ENCODE measurements at regions of chr2 and their contacts with region 1.

Region 1: GRCh38 chr2:54558188-54559005 is 102.3 kb downstream of the SPTBN1 start:
- DNase-seq: peak; percentile 64
- ATAC-seq: peak; percentile 47
- H3K4me3 ChIP-seq: peak overlapping the region; percentile 54
- H3K27ac ChIP-seq: peak overlapping the region; percentile 3; the same call in 1 of the 2 replicates
- H3K4me1 ChIP-seq: peaks cover 21% of the 10 kb centered on the region
- H3K27me3 ChIP-seq: no peaks in the 10 kb centered on the region
- CTCF ChIP-seq: no peak
- POLR2A ChIP-seq: no peak
- RAD21 ChIP-seq: no peak

Region 2: DNA sequence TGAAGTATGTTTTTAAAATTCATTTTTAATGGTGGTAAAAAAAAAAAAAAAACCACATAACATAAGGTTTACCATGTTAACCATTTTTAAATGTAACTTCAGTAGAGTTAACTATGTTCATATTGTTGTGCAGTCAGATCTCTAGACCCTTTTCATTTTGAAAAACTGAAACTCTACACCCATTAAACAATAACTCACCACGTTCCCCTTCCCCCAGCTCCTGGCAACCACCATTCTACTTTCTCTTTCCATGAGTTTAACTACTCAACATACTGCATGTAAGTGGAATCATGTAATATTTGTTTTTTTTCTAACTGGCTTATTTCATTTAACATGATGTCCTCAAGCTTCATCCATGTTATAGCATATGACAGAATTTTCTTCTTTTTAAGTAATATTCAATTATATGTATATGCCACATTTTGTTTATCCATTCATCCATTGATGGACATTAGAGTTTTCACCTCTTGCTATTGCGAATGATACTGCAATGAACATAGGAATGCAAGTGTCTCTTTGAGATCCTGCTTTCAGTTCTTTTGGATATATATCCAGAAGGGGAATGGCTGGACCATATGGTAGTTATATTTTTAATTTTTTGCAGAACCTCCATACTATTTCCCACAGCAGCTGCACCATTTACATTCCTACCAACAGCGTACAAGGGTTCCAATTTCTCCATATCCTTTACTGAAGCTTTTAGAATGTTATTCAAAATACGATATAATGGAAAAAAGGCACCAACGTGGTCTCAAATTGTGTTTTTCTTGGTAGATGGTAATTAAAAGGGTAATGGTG is 11.3 kb before region 1 on chr2:
- CTCF ChIA-PET with region 1: no interaction called
- POLR2A ChIA-PET with region 1: interaction called, 14 read pairs
- dilution Hi-C with region 1: no loop called
- in situ Hi-C with region 1: no loop called
- intact Hi-C with region 1: no loop called
- DNase-seq: no peak
- ATAC-seq: no peak
- H3K4me3 ChIP-seq: no peak overlapping the region
- H3K27ac ChIP-seq: no peak overlapping the region
- H3K4me1 ChIP-seq: peaks cover 3% of the 10 kb centered on the region
- H3K27me3 ChIP-seq: no peaks in the 10 kb centered on the region
- CTCF ChIP-seq: no peak
- POLR2A ChIP-seq: no peak
- RAD21 ChIP-seq: no peak